Breast epithelium (tissue), 4 donors: ENCODE measurements at regions of chr12 and their contacts with region 1.

Region 1: GRCh38 chr12:42780671-42781070 is 191.1 kb upstream of the PRICKLE1 start:
- DNase-seq: no peak
- H3K4me3 ChIP-seq: no peak overlapping the region
- H3K27ac ChIP-seq: no peak overlapping the region
- H3K4me1 ChIP-seq: no peaks in the 10 kb centered on the region
- H3K27me3 ChIP-seq: no peaks in the 10 kb centered on the region
- CTCF ChIP-seq: no peak
- POLR2A ChIP-seq: no peak

Region 2: GRCh38 chr12:42884116-42884515 is 103.4 kb after region 1 on chr12:
- intact Hi-C with region 1: no loop called
- DNase-seq: no peak
- H3K4me3 ChIP-seq: no peak overlapping the region
- H3K27ac ChIP-seq: no peak overlapping the region
- H3K4me1 ChIP-seq: no peaks in the 10 kb centered on the region
- H3K27me3 ChIP-seq: no peaks in the 10 kb centered on the region
- CTCF ChIP-seq: no peak
- POLR2A ChIP-seq: no peak

Region 3: GRCh38 chr12:43120150-43120549 is 339.5 kb after region 1 on chr12:
- intact Hi-C with region 1: loop called (anchors 5 kb)
- DNase-seq: no peak
- H3K4me3 ChIP-seq: no peak overlapping the region
- H3K27ac ChIP-seq: no peak overlapping the region
- H3K4me1 ChIP-seq: no peaks in the 10 kb centered on the region
- H3K27me3 ChIP-seq: no peaks in the 10 kb centered on the region
- CTCF ChIP-seq: no peak
- POLR2A ChIP-seq: no peak